ENCODE measurements at regions of chr10 and their contacts with region 1.

Region 1: GRCh38 chr10:51879238-51879637 is 179.8 kb upstream of the CSTF2T start:
- DNase-seq: no peak
- H3K4me3 Mint-ChIP-seq: peak overlapping the region; percentile 22
- H3K27ac Mint-ChIP-seq: peak overlapping the region; percentile 43
- H3K4me1 Mint-ChIP-seq: peaks cover 13% of the 10 kb centered on the region
- H3K27me3 Mint-ChIP-seq: peaks cover 10% of the 10 kb centered on the region

Region 2: DNA sequence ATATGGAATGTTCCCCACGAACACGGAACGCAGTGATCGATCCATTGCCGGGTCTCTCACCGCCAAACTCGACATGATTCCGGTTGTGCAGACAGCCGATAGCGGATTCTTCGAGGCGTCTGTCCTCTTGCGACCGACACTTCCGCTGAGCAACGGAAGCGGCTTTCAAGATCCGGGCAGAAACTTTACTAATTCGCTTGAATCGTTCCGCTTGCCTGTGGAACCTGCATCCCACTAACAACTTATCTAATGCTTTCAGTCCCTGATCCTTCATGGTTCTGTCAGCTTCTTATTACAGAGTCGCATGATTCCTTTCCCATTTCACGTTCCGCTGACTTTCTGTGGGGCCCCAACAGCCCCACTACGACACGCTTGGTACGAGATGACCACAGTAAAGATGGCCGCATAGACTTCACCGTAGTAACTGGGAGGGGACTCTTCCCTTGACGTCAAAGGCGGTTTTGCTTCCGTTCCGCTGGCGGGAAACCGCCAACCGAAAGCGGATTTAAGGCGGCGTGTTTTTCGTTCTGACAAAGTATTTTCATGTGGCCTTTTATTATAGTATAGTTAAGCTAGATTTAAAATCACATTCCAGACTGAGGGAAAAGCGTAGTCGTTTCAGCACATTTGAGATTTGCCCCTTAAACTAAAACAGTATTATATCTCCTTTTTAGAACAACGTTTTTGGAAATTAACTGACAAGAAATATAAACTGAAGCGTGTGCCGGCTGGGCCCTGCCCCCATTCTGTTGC is 179.6 kb before region 1 on chr10 and contains the start of gene CSTF2T:
- intact Hi-C with region 1: loop called (anchors 5 kb)
- DNase-seq: peak; percentile 87
- H3K4me3 Mint-ChIP-seq: peak within 1 kb of the TSS; percentile 99
- H3K27ac Mint-ChIP-seq: peak within 1 kb of the TSS; percentile 100
- H3K4me1 Mint-ChIP-seq: peaks cover 57% of the 10 kb centered on the region
- H3K27me3 Mint-ChIP-seq: no peaks in the 10 kb centered on the region
- total RNA-seq, gene CSTF2T: 39.0 and 41.2 TPM in 2 replicates

Region 3: DNA sequence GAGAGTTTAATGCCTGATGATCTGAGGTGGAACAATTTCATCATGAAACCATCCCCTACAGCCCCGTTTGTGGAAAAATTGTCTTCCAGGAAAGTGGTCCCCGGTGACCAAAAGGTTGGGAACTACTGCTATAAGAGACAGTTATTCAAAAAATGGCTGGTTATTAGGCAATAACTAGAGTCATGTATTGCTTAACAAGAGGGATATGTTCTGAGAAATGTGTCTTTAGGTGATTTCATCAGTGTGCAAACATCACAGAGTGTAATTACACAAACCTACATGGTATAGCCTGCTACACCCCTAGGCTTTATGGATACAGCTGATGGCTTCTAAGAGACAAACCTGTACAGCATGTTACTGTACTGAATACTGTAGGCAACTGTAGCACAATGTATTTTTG is 108.5 kb before region 1 on chr10:
- intact Hi-C with region 1: no loop called
- DNase-seq: no peak
- H3K4me3 Mint-ChIP-seq: no peak overlapping the region
- H3K27ac Mint-ChIP-seq: no peak overlapping the region
- H3K4me1 Mint-ChIP-seq: no peaks in the 10 kb centered on the region
- H3K27me3 Mint-ChIP-seq: peaks cover 5% of the 10 kb centered on the region

Region 4: GRCh38 chr10:51832652-51833383 is 46.4 kb before region 1 on chr10:
- intact Hi-C with region 1: loop called (anchors 1 kb)
- DNase-seq: no peak
- H3K4me3 Mint-ChIP-seq: no peak overlapping the region
- H3K27ac Mint-ChIP-seq: no peak overlapping the region
- H3K4me1 Mint-ChIP-seq: peaks cover 3% of the 10 kb centered on the region
- H3K27me3 Mint-ChIP-seq: peaks cover 4% of the 10 kb centered on the region